ENCODE measurements at regions of chr3 and their contacts with region 1.

Region 1: DNA sequence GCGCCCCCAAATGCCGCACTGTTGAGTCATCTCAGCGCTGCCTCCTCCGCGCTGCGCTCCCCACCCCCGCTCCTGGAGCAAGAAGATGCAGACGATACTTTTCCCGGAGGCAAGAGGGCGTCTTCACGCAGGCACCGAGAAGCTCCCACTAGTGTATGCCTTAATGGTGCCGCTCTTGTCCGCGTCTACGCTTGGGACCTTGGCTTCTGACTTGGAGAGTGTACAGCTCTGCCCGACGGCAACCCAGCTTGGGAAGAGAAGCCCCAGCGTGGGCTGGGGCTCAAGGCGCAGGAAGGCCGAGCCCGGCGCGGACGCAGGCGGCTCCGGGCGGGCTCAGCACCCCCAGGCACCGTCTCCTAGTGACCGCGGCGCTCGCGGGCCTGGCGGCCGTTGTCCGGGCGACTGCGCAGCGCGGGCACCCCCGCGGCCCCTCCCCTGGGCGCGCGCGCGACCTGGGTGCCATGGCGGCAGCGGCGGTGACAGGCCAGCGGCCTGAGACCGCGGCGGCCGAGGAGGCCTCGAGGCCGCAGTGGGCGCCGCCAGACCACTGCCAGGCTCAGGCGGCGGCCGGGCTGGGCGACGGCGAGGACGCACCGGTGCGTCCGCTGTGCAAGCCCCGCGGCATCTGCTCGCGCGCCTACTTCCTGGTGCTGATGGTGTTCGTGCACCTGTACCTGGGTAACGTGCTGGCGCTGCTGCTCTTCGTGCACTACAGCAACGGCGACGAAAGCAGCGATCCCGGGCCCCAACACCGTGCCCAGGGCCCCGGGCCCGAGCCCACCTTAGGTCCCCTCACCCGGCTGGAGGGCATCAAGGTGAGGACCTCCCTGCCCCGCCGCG is at the start of gene P4HTM:
- DNase-seq: peak; percentile 84 to 97
- H3K4me3 ChIP-seq: peak within 1 kb of the TSS; percentile 61
- CTCF ChIP-seq: no peak
- POLR2A ChIP-seq: no peak
- total RNA-seq, gene P4HTM: 23.4 to 41.9 (median 36.0) TPM

Region 2: GRCh38 chr3:49165771-49166751 is 176.0 kb after region 1 on chr3 and contains the start of gene CCDC71:
- intact Hi-C with region 1: loop called (anchors 10 kb)
- DNase-seq: peak; percentile 56 to 91
- H3K4me3 ChIP-seq: peak within 1 kb of the TSS; percentile 90
- CTCF ChIP-seq: no peak
- POLR2A ChIP-seq: peak in 1 of 2 donors; percentile 1
- total RNA-seq, gene CCDC71: 28.0 to 39.9 (median 33.7) TPM

Region 3: GRCh38 chr3:49454458-49454857 is 464.4 kb after region 1 on chr3:
- intact Hi-C with region 1: loop called (anchors 10 kb)
- DNase-seq: no peak
- H3K4me3 ChIP-seq: no peak overlapping the region
- CTCF ChIP-seq: no peak
- POLR2A ChIP-seq: no peak

Region 4: GRCh38 chr3:50674349-50675178 is 1684.5 kb after region 1 on chr3 and contains the start of gene DOCK3:
- intact Hi-C with region 1: no loop called
- DNase-seq: peak in 1 of 2 donors; percentile 87
- H3K4me3 ChIP-seq: peak within 1 kb of the TSS; percentile 26
- CTCF ChIP-seq: no peak
- POLR2A ChIP-seq: no peak
- total RNA-seq, gene DOCK3: 2.0 to 4.5 (median 3.0) TPM

Measured in lower leg skin (tissue), 4 donors.